Natural killer cell (primary cell): ENCODE measurements at regions of chr6 and their contacts with region 1.

Region 1: GRCh38 chr6:144334131-144334708 is 49.1 kb downstream of the UTRN start:
- DNase-seq: peak; percentile 67 to 89
- ATAC-seq: peak; percentile 85 to 91 (median 88)
- H3K4me3 ChIP-seq: peak overlapping the region; percentile 15
- H3K4me3 Mint-ChIP-seq: peak overlapping the region; percentile 87
- H3K27ac ChIP-seq: peak overlapping the region; percentile 73
- H3K27ac Mint-ChIP-seq: peak overlapping the region; percentile 97 to 99
- H3K4me1 ChIP-seq: peaks cover 41% of the 10 kb centered on the region
- H3K4me1 Mint-ChIP-seq: peaks cover 83 to 84% of the 10 kb centered on the region in 2 donors
- H3K27me3 ChIP-seq: no peaks in the 10 kb centered on the region
- H3K27me3 Mint-ChIP-seq: no peaks in the 10 kb centered on the region
- CTCF ChIP-seq: no peak

Region 2: GRCh38 chr6:144215932-144216667 is 118.1 kb before region 1 on chr6:
- intact Hi-C with region 1: no loop called
- DNase-seq: peak; percentile 91 to 96
- ATAC-seq: peak; percentile 84 to 93 (median 86)
- H3K4me3 ChIP-seq: peak overlapping the region; percentile 78
- H3K4me3 Mint-ChIP-seq: peak overlapping the region; percentile 97
- H3K27ac ChIP-seq: peak overlapping the region; percentile 84
- H3K27ac Mint-ChIP-seq: peak overlapping the region; percentile 97 to 100
- H3K4me1 ChIP-seq: peaks cover 24% of the 10 kb centered on the region
- H3K4me1 Mint-ChIP-seq: peaks cover 37 to 40% of the 10 kb centered on the region in 2 donors
- H3K27me3 ChIP-seq: no peaks in the 10 kb centered on the region
- H3K27me3 Mint-ChIP-seq: peaks cover 8 to 10% of the 10 kb centered on the region in 2 donors
- CTCF ChIP-seq: peak; percentile 48

Region 3: GRCh38 chr6:144305985-144306384 is 28.2 kb before region 1 on chr6:
- intact Hi-C with region 1: loop called (anchors 2 kb)
- DNase-seq: peak; percentile 54 to 74
- ATAC-seq: peak; percentile 66 to 82 (median 77)
- H3K4me3 ChIP-seq: no peak overlapping the region
- H3K4me3 Mint-ChIP-seq: peak overlapping the region; percentile 85
- H3K27ac ChIP-seq: peak overlapping the region; percentile 80
- H3K27ac Mint-ChIP-seq: peak overlapping the region; percentile 89 to 95
- H3K4me1 ChIP-seq: peaks cover 35% of the 10 kb centered on the region
- H3K4me1 Mint-ChIP-seq: peaks cover 72 to 73% of the 10 kb centered on the region in 2 donors
- H3K27me3 ChIP-seq: no peaks in the 10 kb centered on the region
- H3K27me3 Mint-ChIP-seq: no peaks in the 10 kb centered on the region
- CTCF ChIP-seq: no peak

Region 4: GRCh38 chr6:144349690-144350527 is 15.7 kb after region 1 on chr6:
- intact Hi-C with region 1: loop called (anchors 2 kb)
- DNase-seq: peak in 1 of 2 donors; percentile 60
- ATAC-seq: peak; percentile 32 to 62 (median 32)
- H3K4me3 ChIP-seq: peak overlapping the region; percentile 17
- H3K4me3 Mint-ChIP-seq: peak overlapping the region; percentile 92
- H3K27ac ChIP-seq: peak overlapping the region; percentile 87
- H3K27ac Mint-ChIP-seq: peak overlapping the region; percentile 90 to 99
- H3K4me1 ChIP-seq: peaks cover 83% of the 10 kb centered on the region
- H3K4me1 Mint-ChIP-seq: peaks cover 81 to 90% of the 10 kb centered on the region in 2 donors
- H3K27me3 ChIP-seq: no peaks in the 10 kb centered on the region
- H3K27me3 Mint-ChIP-seq: no peaks in the 10 kb centered on the region
- CTCF ChIP-seq: no peak